Aorta (tissue), 5 donors: ENCODE measurements at regions of chr19 and their contacts with region 1.

Region 1: GRCh38 chr19:35279985-35280821 is 2.1 kb upstream of the HAMP start:
- DNase-seq: no peak
- ATAC-seq: peak; percentile 34
- H3K4me3 ChIP-seq: no peak overlapping the region
- H3K27ac ChIP-seq: no peak overlapping the region
- H3K4me1 ChIP-seq: no peaks in the 10 kb centered on the region
- H3K27me3 ChIP-seq: no peaks in the 10 kb centered on the region

Region 2: GRCh38 chr19:35495107-35496064 is 215.2 kb after region 1 on chr19:
- intact Hi-C with region 1: loop called (anchors 5 to 10 kb)
- DNase-seq: peak; percentile 72 to 88
- ATAC-seq: peak; percentile 91
- H3K4me3 ChIP-seq: no peak overlapping the region
- H3K27ac ChIP-seq: no peak overlapping the region
- H3K4me1 ChIP-seq: no peaks in the 10 kb centered on the region
- H3K27me3 ChIP-seq: no peaks in the 10 kb centered on the region